Caco-2 (cell line): ENCODE measurements at regions of chr17 and their contacts with region 1.

Region 1: GRCh38 chr17:3845621-3846441 is at the start of gene NCBP3:
- DNase-seq: peak; percentile 75 to 85
- H3K4me3 ChIP-seq: peak within 1 kb of the TSS; percentile 70
- H3K4me3 Mint-ChIP-seq: peak within 1 kb of the TSS; percentile 80
- H3K27ac Mint-ChIP-seq: no peak within 1 kb of the TSS
- H3K4me1 ChIP-seq: 0 out of 2 replicates have a peak, but pooled peaks cover 3% of the 10 kb centered on the region
- H3K4me1 Mint-ChIP-seq: no peaks in the 10 kb centered on the region
- H3K27me3 ChIP-seq: no peaks in the 10 kb centered on the region
- H3K27me3 Mint-ChIP-seq: no peaks in the 10 kb centered on the region
- CTCF ChIP-seq: peak; percentile 66 to 73
- total RNA-seq, gene NCBP3: 28.4 and 32.8 TPM in 2 replicates

Region 2: DNA sequence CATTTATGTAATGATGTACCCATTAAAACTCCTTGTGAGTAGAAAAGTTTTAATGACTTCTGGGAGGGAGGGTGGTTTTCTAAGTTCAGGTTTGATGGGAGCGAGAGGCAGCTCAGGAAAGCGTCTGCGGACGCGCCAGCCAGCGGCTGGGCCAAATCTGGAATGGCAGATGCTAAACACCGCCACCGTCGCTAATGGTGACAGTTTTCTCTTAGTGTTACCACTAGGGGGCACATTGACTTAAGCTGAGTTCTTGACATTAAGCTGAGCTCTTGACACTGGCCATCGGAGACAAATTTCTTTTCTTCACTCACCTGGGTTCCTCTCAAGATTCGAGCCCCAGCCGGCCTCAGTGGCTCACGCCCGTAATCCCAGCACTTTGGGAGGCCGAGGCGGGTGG is 243.3 kb before region 1 on chr17:
- CTCF ChIA-PET with region 1: no interaction called
- POLR2A ChIA-PET with region 1: no interaction called
- intact Hi-C with region 1: no loop called
- DNase-seq: peak in 1 of 2 experiments; percentile 20
- H3K4me3 ChIP-seq: no peak overlapping the region
- H3K4me3 Mint-ChIP-seq: no peak overlapping the region
- H3K27ac Mint-ChIP-seq: no peak overlapping the region
- H3K4me1 ChIP-seq: no peaks in the 10 kb centered on the region
- H3K4me1 Mint-ChIP-seq: no peaks in the 10 kb centered on the region
- H3K27me3 ChIP-seq: no peaks in the 10 kb centered on the region
- H3K27me3 Mint-ChIP-seq: no peaks in the 10 kb centered on the region
- CTCF ChIP-seq: peak in 1 of 2 experiments; percentile 23

Region 3: GRCh38 chr17:3893003-3893719 is 47.3 kb after region 1 on chr17 and contains the start of gene CAMKK1:
- CTCF ChIA-PET with region 1: interaction called, 11 read pairs
- POLR2A ChIA-PET with region 1: no interaction called
- intact Hi-C with region 1: no loop called
- DNase-seq: peak; percentile 84 to 88
- H3K4me3 ChIP-seq: peak within 1 kb of the TSS; percentile 62
- H3K4me3 Mint-ChIP-seq: peak within 1 kb of the TSS; percentile 73
- H3K27ac Mint-ChIP-seq: peak within 1 kb of the TSS; percentile 91
- H3K4me1 ChIP-seq: peaks cover 7% of the 10 kb centered on the region; the same call in 1 of the 2 replicates
- H3K4me1 Mint-ChIP-seq: peaks cover 9% of the 10 kb centered on the region
- H3K27me3 ChIP-seq: no peaks in the 10 kb centered on the region
- H3K27me3 Mint-ChIP-seq: no peaks in the 10 kb centered on the region
- CTCF ChIP-seq: no peak
- total RNA-seq, gene CAMKK1: 1.4 and 1.9 TPM in 2 replicates